Activated CD4-positive, alpha-beta T cell treated with anti-CD3 and anti-CD28 coated beads, Interleukin-2, amount 10 ng/mL, durations not matched to agents 24 days and 14 days (primary cell): ENCODE measurements at regions of chr2 and their contacts with region 1.

Region 1: DNA sequence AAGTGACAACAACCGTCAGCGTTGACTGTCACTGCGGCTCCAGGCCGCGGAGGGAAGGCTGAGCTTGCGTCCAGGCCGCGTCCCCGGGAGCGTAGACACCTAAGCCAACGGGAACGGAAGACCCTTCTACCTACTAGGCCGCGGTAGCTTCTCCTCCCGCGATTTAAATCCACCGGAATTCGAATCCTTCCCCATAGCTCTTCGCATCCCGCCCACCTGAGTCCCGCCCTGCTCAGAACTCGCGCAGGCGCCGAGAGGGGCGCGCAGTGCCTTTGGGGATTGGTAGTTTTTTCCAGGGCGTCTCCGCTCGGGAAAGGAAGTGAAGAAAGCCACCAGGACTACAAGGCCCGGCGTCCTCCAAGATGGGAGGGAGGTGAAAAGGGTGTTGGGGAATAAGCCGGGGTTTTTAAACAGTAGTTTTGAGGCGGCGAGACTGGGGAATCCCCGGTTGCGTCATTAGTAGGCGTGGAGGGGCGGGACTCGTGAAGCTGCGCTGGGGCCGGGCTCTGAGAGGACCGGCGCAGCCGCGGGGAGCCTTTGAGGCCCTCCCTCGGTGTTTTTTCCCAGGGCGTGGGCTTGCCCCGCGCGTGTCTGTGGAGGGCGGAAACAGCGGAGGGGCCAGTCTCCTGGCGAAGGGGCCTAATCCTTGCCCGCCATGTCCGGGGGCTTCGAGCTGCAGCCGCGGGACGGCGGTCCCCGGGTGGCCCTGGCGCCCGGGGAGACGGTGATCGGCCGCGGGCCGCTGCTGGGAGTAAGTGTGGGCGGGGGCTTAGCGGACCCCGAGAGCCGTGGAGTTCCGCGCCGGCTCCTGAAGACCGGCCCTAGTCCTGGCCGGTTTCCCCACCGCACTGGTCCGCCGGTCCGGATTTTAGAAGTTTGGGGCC is at the starts of genes APLF and FBXO48:
- DNase-seq: peak; percentile 100
- H3K4me3 Mint-ChIP-seq: peak within 1 kb of the TSS; percentile 96
- H3K27ac Mint-ChIP-seq: peak within 1 kb of the TSS; percentile 93
- H3K4me1 Mint-ChIP-seq: peaks cover 44% of the 10 kb centered on the region
- H3K27me3 Mint-ChIP-seq: no peaks in the 10 kb centered on the region
- total RNA-seq, gene APLF: 2.0 and 2.1 TPM in 2 replicates
- total RNA-seq, gene FBXO48: 1.2 TPM in 2 replicates

Region 2: GRCh38 chr2:68062680-68063387 is 404.5 kb before region 1 on chr2 and contains the start of gene C1D:
- intact Hi-C with region 1: loop called (anchors 2 kb)
- DNase-seq: peak; percentile 98
- H3K4me3 Mint-ChIP-seq: peak within 1 kb of the TSS; percentile 93
- H3K27ac Mint-ChIP-seq: peak within 1 kb of the TSS; percentile 95
- H3K4me1 Mint-ChIP-seq: peaks cover 14% of the 10 kb centered on the region
- H3K27me3 Mint-ChIP-seq: peaks cover 22% of the 10 kb centered on the region
- total RNA-seq, gene C1D: 28.9 and 33.7 TPM in 2 replicates

Region 3: DNA sequence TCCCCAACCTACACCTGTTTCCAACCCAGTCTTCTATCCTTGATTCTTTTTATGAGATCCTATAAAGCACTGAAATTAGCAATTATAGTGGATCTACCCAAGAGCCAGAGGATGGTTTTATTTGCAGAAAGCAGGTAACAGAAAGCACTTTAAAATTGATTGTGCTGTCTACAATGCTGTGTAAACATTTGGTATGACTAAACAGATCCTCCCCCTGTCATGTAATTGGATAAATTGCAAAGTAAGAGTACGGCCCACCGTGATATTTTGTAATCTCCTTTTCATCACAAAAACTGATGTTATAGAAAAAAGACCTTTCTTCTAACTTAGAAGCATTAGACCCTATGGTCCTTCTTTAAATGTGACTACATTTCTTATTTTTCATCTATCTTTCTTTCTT is 203.7 kb before region 1 on chr2:
- intact Hi-C with region 1: no loop called
- DNase-seq: no peak
- H3K4me3 Mint-ChIP-seq: no peak overlapping the region
- H3K27ac Mint-ChIP-seq: no peak overlapping the region
- H3K4me1 Mint-ChIP-seq: no peaks in the 10 kb centered on the region
- H3K27me3 Mint-ChIP-seq: peaks cover 30% of the 10 kb centered on the region

Region 4: DNA sequence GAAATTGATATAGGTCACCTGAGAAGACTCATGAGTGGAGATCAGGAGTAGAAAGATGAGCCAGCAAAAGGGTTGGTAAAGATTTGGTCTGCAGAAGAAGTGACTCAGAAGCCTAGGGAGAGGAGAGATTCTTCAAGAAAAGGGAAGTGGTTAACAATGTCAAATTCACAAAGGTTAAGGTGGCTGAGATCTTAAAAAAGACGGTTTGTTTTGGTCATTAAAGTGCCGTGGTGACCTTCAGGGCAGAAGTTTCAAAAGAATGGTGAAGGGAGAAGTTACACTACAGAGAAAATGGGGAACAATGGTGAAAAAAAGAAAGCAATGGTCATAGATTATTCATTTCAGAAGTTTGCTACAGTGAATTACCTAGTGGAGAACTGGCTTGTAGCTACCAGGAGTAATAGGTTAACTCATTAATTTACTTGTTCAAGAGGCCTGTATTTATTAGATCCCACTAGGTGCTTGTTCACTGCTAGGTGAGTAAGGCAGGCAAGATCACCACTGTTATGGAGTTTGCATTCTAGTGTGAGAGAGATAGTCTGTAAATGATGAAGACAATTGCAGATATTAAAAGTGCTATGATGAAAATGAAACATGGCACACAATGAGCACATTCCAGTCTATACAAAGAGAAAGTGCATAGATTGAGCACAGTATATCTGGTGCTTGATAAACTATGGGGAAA is 43.2 kb before region 1 on chr2:
- intact Hi-C with region 1: loop called (anchors 2 kb)
- DNase-seq: peak; percentile 64
- H3K4me3 Mint-ChIP-seq: no peak overlapping the region
- H3K27ac Mint-ChIP-seq: no peak overlapping the region
- H3K4me1 Mint-ChIP-seq: peaks cover 3% of the 10 kb centered on the region
- H3K27me3 Mint-ChIP-seq: peaks cover 12% of the 10 kb centered on the region

Region 5: GRCh38 chr2:68482296-68482820 is 15.0 kb after region 1 on chr2:
- intact Hi-C with region 1: no loop called
- DNase-seq: no peak
- H3K4me3 Mint-ChIP-seq: no peak overlapping the region
- H3K27ac Mint-ChIP-seq: no peak overlapping the region
- H3K4me1 Mint-ChIP-seq: peaks cover 3% of the 10 kb centered on the region
- H3K27me3 Mint-ChIP-seq: peaks cover 3% of the 10 kb centered on the region

Region 6: GRCh38 chr2:68594674-68595492 is 127.6 kb after region 1 on chr2:
- intact Hi-C with region 1: loop called (anchors 1 kb)
- DNase-seq: peak; percentile 86
- H3K4me3 Mint-ChIP-seq: no peak overlapping the region
- H3K27ac Mint-ChIP-seq: peak overlapping the region; percentile 31
- H3K4me1 Mint-ChIP-seq: peaks cover 7% of the 10 kb centered on the region
- H3K27me3 Mint-ChIP-seq: peaks cover 18% of the 10 kb centered on the region

Region 7: GRCh38 chr2:68689553-68690537 is 222.5 kb after region 1 on chr2:
- intact Hi-C with region 1: no loop called
- DNase-seq: peak; percentile 63
- H3K4me3 Mint-ChIP-seq: peak overlapping the region; percentile 11
- H3K27ac Mint-ChIP-seq: peak overlapping the region; percentile 49
- H3K4me1 Mint-ChIP-seq: peaks cover 20% of the 10 kb centered on the region
- H3K27me3 Mint-ChIP-seq: peaks cover 8% of the 10 kb centered on the region

Region 8: GRCh38 chr2:68734688-68735525 is 267.6 kb after region 1 on chr2 and contains the start of gene ARHGAP25:
- intact Hi-C with region 1: loop called (anchors 1 kb)
- DNase-seq: peak; percentile 89
- H3K4me3 Mint-ChIP-seq: no peak within 1 kb of the TSS
- H3K27ac Mint-ChIP-seq: no peak within 1 kb of the TSS
- H3K4me1 Mint-ChIP-seq: peaks cover 41% of the 10 kb centered on the region
- H3K27me3 Mint-ChIP-seq: no peaks in the 10 kb centered on the region
- total RNA-seq, gene ARHGAP25: 37.8 and 42.2 TPM in 2 replicates

Region 9: DNA sequence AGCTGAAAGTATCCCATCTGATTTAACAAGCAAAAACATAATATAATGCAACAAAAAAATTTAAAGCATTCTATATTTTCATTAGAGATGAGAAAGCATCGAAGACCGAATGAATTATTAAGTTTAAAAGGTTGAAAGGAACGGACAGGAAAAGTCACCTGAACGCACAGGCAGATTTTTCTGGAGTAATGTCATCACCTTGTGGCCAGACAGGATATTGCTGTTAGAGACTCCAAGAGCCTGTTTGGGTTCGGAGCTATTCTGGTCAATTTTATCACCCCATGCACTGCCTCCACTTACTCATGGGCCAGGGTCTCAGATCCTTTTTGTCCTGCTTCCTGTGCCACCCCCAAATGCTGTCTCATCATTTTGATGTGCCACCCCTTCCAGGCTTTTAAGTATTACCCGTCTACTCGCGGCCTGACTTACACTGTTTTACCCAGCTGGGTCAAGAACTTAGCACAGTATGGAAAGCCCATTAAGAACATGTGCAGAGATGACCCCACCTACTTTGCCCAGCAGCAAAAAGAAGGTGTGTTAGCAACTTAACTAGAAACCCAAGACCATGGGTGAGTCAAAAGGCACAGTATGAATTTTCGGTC is 458.1 kb after region 1 on chr2:
- intact Hi-C with region 1: loop called (anchors 1 kb)
- DNase-seq: peak; percentile 90
- H3K4me3 Mint-ChIP-seq: no peak overlapping the region
- H3K27ac Mint-ChIP-seq: no peak overlapping the region
- H3K4me1 Mint-ChIP-seq: peaks cover 4% of the 10 kb centered on the region
- H3K27me3 Mint-ChIP-seq: peaks cover 9% of the 10 kb centered on the region